WTC11 (cell line): ENCODE measurements at regions of chr11 and their contacts with region 1.

Region 1: GRCh38 chr11:132126973-132127899 is 756.8 kb downstream of the NTM start:
- DNase-seq: peak; percentile 46
- ATAC-seq: peak; percentile 46
- H3K4me3 Mint-ChIP-seq: no peak overlapping the region
- H3K27ac Mint-ChIP-seq: no peak overlapping the region
- H3K4me1 Mint-ChIP-seq: peaks cover 23% of the 10 kb centered on the region
- H3K27me3 Mint-ChIP-seq: no peaks in the 10 kb centered on the region
- CTCF ChIP-seq: peak; percentile 47

Region 2: GRCh38 chr11:131688051-131688698 is 439.1 kb before region 1 on chr11:
- CTCF ChIA-PET with region 1: interaction called, 58 read pairs
- POLR2A ChIA-PET with region 1: no interaction called
- DNase-seq: peak; percentile 81
- ATAC-seq: peak; percentile 62
- H3K4me3 Mint-ChIP-seq: no peak overlapping the region
- H3K27ac Mint-ChIP-seq: no peak overlapping the region
- H3K4me1 Mint-ChIP-seq: 0 out of 2 replicates have a peak, but pooled peaks cover 6% of the 10 kb centered on the region
- H3K27me3 Mint-ChIP-seq: peaks cover 24% of the 10 kb centered on the region
- CTCF ChIP-seq: peak; percentile 81

Region 3: DNA sequence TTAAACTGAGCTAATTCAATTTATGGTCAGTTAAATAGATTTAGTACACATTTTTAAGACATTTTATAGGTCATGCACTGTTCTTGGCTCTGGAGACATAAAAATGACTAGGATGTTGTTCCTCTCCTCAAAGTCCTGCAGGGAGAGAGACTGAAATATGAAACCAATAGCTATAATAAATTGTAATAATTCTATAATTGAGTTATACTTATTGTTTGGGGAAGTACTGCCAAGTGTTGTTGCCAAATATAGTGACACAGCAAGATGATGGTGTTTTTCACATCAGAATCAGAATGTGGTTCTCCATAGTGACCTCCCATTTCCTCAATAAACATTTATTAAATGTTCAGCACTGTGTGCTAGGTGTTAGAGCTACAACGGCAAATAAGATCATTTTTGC is 286.2 kb before region 1 on chr11:
- CTCF ChIA-PET with region 1: interaction called, 16 read pairs
- POLR2A ChIA-PET with region 1: no interaction called
- DNase-seq: no peak
- ATAC-seq: no peak
- H3K4me3 Mint-ChIP-seq: no peak overlapping the region
- H3K27ac Mint-ChIP-seq: no peak overlapping the region
- H3K4me1 Mint-ChIP-seq: peaks cover 44% of the 10 kb centered on the region
- H3K27me3 Mint-ChIP-seq: no peaks in the 10 kb centered on the region; the same call in none of the 2 replicates
- CTCF ChIP-seq: no peak

Region 4: DNA sequence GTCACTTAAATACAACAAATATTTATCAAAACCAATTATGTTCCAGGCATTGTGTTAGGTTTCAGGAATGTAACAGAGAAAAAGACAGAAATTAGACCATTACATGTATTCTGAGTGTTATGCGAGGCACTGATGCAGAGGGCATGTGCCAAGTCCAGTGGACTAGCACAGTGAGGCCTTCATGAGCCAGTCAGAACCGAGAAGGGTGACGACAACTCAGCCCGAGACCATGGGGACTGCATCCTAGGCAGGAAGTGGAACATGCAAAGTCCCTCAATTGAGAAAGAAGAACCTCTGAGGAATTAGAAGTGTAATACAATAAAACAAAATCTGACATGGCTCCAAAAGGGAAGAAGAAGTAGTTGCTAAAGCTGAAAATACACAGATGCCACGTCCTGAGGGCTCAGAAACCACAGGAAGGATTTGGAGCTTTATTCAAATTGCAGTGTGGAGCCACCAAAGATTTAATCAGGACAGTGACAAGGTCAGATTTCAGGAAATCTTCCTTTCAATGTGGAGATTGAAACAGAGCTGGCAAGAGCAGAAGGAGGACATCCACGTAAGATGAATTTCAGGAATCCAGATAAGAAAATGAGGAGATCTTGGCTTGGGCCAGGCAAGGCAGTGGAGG is 227.2 kb before region 1 on chr11:
- CTCF ChIA-PET with region 1: interaction called, 11 read pairs
- POLR2A ChIA-PET with region 1: no interaction called
- DNase-seq: no peak
- ATAC-seq: no peak
- H3K4me3 Mint-ChIP-seq: no peak overlapping the region
- H3K27ac Mint-ChIP-seq: no peak overlapping the region
- H3K4me1 Mint-ChIP-seq: peaks cover 41% of the 10 kb centered on the region
- H3K27me3 Mint-ChIP-seq: no peaks in the 10 kb centered on the region
- CTCF ChIP-seq: no peak

Region 5: DNA sequence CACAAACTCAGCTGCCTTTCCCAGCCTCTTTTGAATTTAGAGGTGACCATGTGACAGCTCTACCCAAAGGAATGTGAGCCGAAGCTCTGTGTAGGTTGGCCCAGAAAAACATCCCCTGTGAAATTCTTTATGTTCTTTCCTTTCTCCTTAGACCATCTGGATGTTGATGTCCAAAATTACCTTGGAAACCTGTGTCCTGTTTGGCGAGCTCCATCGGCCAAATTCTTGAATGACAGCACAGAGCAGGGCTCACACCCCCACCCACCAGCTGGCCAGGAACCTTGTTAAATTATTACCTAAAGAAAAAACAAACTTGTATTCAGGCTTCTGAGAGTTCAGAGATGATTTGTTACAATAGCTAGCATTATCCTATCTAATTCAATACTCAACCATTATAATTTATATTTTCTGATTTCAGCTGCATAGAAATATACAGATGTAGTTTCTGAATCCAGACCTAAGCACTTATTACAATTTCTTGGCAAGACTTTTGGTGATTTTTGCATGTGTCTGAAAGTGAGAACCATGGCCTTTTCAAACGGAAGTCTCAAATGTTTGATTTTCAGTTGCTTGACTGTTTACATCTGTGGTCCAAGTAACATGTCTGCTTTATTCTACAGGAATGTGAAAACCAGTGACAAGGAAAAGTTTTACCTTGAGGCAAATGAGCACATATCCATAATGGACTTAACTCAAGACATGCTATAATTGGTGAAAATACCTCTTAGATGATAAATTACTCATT is 202.6 kb before region 1 on chr11:
- CTCF ChIA-PET with region 1: interaction called, 14 read pairs
- POLR2A ChIA-PET with region 1: no interaction called
- DNase-seq: no peak
- ATAC-seq: no peak
- H3K4me3 Mint-ChIP-seq: no peak overlapping the region
- H3K27ac Mint-ChIP-seq: no peak overlapping the region
- H3K4me1 Mint-ChIP-seq: peaks cover 28% of the 10 kb centered on the region
- H3K27me3 Mint-ChIP-seq: no peaks in the 10 kb centered on the region
- CTCF ChIP-seq: no peak

Region 6: GRCh38 chr11:131943295-131943694 is 183.9 kb before region 1 on chr11:
- CTCF ChIA-PET with region 1: no interaction called
- POLR2A ChIA-PET with region 1: no interaction called
- DNase-seq: no peak
- ATAC-seq: no peak
- H3K4me3 Mint-ChIP-seq: no peak overlapping the region
- H3K27ac Mint-ChIP-seq: no peak overlapping the region
- H3K4me1 Mint-ChIP-seq: peaks cover 1% of the 10 kb centered on the region
- H3K27me3 Mint-ChIP-seq: no peaks in the 10 kb centered on the region
- CTCF ChIP-seq: no peak

Region 7: DNA sequence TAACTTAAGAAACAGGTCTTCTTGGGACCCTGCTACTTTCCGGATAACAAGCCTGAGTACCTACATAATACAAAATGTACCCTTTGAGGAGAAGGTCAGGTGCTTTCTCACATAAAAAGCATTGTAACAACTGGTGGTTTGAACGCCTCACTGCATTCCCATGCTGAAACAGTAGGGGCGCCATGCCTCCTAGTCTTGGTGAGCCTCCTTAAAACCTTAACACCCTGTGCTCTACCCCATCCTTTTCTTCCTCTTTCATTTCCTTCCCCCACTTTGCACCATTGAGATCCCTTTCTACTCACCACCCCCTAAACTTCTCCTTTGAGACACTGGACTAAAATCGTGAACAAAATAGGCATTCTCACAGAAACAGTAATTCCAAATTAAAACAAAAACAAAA is 27.5 kb before region 1 on chr11:
- CTCF ChIA-PET with region 1: interaction called, 11 read pairs
- POLR2A ChIA-PET with region 1: no interaction called
- DNase-seq: peak; percentile 76
- ATAC-seq: peak; percentile 91
- H3K4me3 Mint-ChIP-seq: no peak overlapping the region
- H3K27ac Mint-ChIP-seq: no peak overlapping the region
- H3K4me1 Mint-ChIP-seq: peaks cover 38% of the 10 kb centered on the region
- H3K27me3 Mint-ChIP-seq: no peaks in the 10 kb centered on the region
- CTCF ChIP-seq: peak; percentile 87

Region 8: GRCh38 chr11:132258875-132259274 is 131.6 kb after region 1 on chr11:
- CTCF ChIA-PET with region 1: no interaction called
- POLR2A ChIA-PET with region 1: no interaction called
- DNase-seq: no peak
- ATAC-seq: no peak
- H3K4me3 Mint-ChIP-seq: no peak overlapping the region
- H3K27ac Mint-ChIP-seq: no peak overlapping the region
- H3K4me1 Mint-ChIP-seq: no peaks in the 10 kb centered on the region
- H3K27me3 Mint-ChIP-seq: no peaks in the 10 kb centered on the region
- CTCF ChIP-seq: no peak

Region 9: DNA sequence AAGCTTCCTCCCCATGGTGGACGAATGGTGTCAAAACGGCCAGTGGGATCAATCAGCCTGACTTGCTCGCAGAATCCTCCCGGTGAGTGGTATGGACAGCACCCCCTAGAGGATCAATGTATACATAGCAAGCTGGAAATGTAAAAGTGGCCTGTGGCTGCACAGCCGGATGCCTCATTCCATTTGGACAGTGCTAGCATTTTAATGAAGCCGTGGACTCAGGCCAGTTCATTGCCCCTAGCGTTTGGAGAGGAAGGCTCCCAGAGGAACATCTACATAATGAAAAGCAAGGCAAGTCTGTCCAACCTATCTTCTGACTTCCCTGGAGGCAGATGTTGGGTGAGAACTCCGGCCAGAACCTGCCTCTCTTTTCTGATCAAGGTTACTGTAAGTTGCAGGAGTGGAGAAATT is 185.5 kb after region 1 on chr11:
- CTCF ChIA-PET with region 1: interaction called, 13 read pairs
- POLR2A ChIA-PET with region 1: no interaction called
- DNase-seq: peak; percentile 45
- ATAC-seq: peak; percentile 91
- H3K4me3 Mint-ChIP-seq: no peak overlapping the region
- H3K27ac Mint-ChIP-seq: no peak overlapping the region
- H3K4me1 Mint-ChIP-seq: peaks cover 6% of the 10 kb centered on the region; the same call in 1 of the 2 replicates
- H3K27me3 Mint-ChIP-seq: no peaks in the 10 kb centered on the region
- CTCF ChIP-seq: peak; percentile 73